ENCODE measurements at regions of chr16 and their contacts with region 1.

Region 1: DNA sequence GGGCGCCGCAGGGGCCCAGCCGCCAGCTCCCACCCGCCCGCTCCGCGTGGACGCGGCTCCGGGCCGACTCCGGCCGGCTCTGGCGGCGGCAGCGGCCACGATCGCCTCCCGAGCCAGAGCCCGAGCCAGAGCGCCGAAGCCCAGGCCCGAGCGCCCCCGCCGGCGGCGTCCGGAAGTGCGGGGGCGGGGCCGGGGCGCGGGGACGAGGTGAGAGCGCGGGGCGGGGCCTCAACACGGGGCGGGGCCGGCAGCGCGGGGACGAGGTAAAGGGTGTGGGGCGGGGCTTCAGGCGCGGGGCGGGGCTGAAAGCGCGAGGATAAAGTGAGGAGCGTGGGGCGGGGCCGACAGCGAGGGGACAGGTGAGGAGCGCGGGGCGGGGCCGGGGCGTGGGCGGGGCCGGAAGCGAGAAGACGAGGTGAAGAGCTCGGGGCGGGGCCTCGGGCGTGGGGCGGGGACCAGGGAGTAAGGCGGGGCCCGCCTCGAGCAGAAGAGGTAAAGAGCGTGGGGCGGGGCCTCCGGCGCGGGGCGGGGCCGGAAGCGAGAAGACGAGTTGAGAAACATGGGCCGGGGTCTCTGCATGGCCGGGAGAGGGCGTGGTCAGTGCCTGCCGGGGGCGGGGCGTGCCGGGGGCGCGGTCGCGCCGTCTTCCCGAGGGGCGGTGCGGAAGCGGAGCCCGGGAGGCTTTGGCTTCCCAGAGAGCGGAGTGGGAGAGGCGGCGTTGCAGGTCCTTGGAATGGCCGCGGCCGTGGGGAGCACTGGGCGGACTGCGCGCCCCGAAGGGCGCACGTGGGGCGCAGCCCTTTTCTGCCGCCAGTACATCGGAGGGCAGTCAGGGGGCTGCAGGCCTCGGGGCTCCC is at the start of gene AXIN1:
- DNase-seq: peak; percentile 97 to 100 (median 99)
- H3K4me3 ChIP-seq: peak within 1 kb of the TSS in 1 of 2 donors; percentile 50
- H3K4me3 Mint-ChIP-seq: peak within 1 kb of the TSS; percentile 92 to 96 (median 93)
- H3K27ac ChIP-seq: peak within 1 kb of the TSS; percentile 57
- H3K27ac Mint-ChIP-seq: peak within 1 kb of the TSS; percentile 88 to 97 (median 94)
- H3K4me1 ChIP-seq: peaks cover 70% of the 10 kb centered on the region
- H3K4me1 Mint-ChIP-seq: peaks cover 25 to 69% (median 51%) of the 10 kb centered on the region in 4 donors
- H3K27me3 ChIP-seq: no peaks in the 10 kb centered on the region
- H3K27me3 Mint-ChIP-seq: no peaks in the 10 kb centered on the region
- total RNA-seq, gene AXIN1: 40.3 to 43.0 TPM

Region 2: DNA sequence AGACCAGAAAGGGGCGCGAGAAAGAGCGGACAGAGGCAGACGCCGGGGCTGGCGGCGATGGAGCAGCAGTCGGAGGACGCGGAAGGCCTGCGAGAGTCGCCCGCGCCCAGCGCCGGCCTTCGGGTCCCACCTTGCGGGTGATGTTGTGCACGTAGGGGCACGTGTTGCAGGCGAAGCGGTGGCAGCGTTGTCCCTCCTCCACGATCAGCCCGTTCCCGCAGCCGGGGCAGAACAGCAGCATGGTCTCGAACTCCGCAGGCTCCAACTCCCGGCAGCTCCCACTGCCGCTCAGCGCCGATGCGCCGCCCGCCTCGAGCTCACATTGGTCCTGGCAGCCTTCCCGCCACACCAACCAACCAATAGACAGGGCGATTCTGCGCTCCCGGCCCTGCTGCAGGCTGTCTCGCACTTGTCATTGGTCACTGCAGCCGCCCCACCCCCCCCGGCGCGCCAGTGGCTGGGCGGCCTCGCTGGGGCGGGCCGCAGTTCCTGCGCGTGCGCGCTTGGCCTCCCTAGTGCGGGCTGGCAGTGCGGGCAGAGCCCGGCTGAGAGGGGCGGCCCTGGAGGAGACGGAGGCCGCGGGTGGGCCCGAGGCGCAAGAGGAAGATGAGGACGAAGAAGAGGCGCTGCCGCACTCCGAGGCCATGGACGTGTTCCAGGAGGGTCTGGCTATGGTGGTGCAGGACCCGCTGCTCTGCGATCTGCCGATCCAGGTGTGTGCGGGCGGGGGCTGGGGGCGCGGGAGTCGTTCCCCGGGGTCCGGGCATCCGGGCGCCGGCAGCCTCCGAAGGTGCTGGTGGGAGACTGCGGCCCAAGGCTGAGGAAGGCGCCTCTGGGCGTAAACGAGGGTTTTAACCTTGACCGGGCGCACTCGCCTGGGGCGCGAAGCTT is 299.2 kb before region 1 on chr16 and contains the starts of genes POLR3K and SNRNP25:
- CTCF ChIA-PET with region 1: no interaction called
- POLR2A ChIA-PET with region 1: interaction called, 4 read pairs
- intact Hi-C with region 1: loop called (anchors 1 kb)
- DNase-seq: peak; percentile 96 to 98 (median 97)
- H3K4me3 ChIP-seq: peak within 1 kb of the TSS; percentile 79 to 84
- H3K4me3 Mint-ChIP-seq: peak within 1 kb of the TSS; percentile 90 to 99 (median 97)
- H3K27ac ChIP-seq: peak within 1 kb of the TSS; percentile 60
- H3K27ac Mint-ChIP-seq: peak within 1 kb of the TSS; percentile 84 to 96 (median 94)
- H3K4me1 ChIP-seq: peaks cover 29% of the 10 kb centered on the region
- H3K4me1 Mint-ChIP-seq: peaks cover 16 to 40% (median 24%) of the 10 kb centered on the region in 4 donors
- H3K27me3 ChIP-seq: no peaks in the 10 kb centered on the region
- H3K27me3 Mint-ChIP-seq: no peaks in the 10 kb centered on the region
- total RNA-seq, gene POLR3K: 19.9 to 21.7 TPM
- total RNA-seq, gene SNRNP25: 10.0 to 10.2 TPM

Region 3: GRCh38 chr16:188671-189070 is 164.1 kb before region 1 on chr16:
- CTCF ChIA-PET with region 1: no interaction called
- POLR2A ChIA-PET with region 1: no interaction called
- intact Hi-C with region 1: no loop called
- DNase-seq: peak in 2 of 5 donors; percentile 21 to 28
- H3K4me3 ChIP-seq: no peak overlapping the region
- H3K4me3 Mint-ChIP-seq: no peak overlapping the region
- H3K27ac ChIP-seq: no peak overlapping the region
- H3K27ac Mint-ChIP-seq: peak overlapping the region in 5 of 7 donors; percentile 22 to 78 (median 72)
- H3K4me1 ChIP-seq: no peaks in the 10 kb centered on the region
- H3K4me1 Mint-ChIP-seq: peaks cover 0 to 4% (median 3%) of the 10 kb centered on the region in 4 donors
- H3K27me3 ChIP-seq: no peaks in the 10 kb centered on the region
- H3K27me3 Mint-ChIP-seq: no peaks in the 10 kb centered on the region

Region 4: DNA sequence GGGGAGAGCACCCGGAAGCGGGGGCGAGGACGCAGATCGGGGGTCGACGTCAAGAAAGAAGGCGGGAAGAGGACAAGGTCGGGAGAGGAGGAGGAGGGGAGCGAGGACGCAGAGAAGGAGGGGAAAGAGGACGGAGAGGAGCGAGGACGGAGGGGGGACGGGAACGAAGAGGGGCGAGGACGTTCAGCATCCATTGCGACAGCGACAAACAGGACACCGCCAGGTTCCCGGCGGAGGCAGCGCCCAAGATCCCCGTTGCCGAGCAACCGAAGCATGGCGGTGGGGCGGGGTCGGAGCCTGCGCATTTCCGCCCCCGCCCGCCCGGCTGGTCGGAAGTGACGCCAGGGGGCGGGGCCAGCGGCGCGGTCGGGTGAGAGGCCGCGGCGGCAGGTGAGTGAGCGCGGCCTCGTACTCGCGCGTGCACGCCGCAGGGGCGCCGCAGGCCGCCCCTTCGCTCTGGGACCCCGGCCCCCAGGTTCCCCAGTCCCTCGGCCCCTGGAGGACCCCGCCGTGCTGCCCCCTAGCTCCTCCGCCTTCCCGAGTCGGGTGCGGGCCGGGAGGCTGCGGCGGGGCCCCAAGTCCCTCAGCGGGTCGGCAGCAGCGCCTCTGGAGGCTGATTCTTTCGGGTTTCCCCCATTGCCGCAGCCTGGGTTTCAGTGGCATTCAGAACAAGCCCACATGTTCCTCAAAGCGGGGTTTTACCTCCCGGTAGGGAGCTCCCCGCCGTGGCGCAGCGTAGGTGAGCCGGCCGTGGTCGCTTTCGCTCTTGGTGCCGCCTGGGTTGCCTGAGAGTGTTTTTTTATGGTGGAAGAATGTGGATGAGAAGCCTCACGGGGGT is 118.1 kb before region 1 on chr16 and contains the start of gene FAM234A:
- CTCF ChIA-PET with region 1: interaction called, 10 read pairs
- POLR2A ChIA-PET with region 1: interaction called, 25 read pairs
- intact Hi-C with region 1: loop called (anchors 1 kb)
- DNase-seq: peak; percentile 95 to 98 (median 96)
- H3K4me3 ChIP-seq: peak within 1 kb of the TSS; percentile 69 to 91
- H3K4me3 Mint-ChIP-seq: peak within 1 kb of the TSS; percentile 90 to 97 (median 96)
- H3K27ac ChIP-seq: peak within 1 kb of the TSS; percentile 98
- H3K27ac Mint-ChIP-seq: peak within 1 kb of the TSS; percentile 99 to 100 (median 99)
- H3K4me1 ChIP-seq: peaks cover 6% of the 10 kb centered on the region
- H3K4me1 Mint-ChIP-seq: peaks cover 8 to 25% (median 16%) of the 10 kb centered on the region in 4 donors
- H3K27me3 ChIP-seq: no peaks in the 10 kb centered on the region
- H3K27me3 Mint-ChIP-seq: no peaks in the 10 kb centered on the region
- total RNA-seq, gene FAM234A: 34.8 to 41.1 TPM

Region 5: DNA sequence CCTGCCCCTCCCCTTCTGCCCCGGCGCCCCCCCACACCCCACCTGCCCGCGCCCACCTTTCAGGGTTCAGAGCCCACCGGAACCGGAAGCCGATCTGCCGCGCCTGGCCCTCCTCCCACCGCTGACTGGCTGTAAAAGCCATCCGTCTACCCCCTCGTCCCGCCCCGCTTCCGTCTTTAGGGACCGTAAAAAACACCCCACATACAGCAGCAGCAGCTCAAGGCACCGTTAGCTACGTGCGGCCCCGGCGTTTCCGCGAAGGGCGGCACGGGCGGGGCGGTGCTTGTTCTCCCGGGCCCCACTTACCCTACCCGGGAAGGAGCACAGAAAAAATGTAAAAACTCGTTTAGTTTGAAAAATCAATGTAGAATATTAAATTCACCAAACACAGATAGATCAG is 17.7 kb after region 1 on chr16 and contains the start of gene MRPL28:
- CTCF ChIA-PET with region 1: no interaction called
- POLR2A ChIA-PET with region 1: interaction called, 8 read pairs
- intact Hi-C with region 1: loop called (anchors 2 kb)
- DNase-seq: peak; percentile 90 to 95 (median 91)
- H3K4me3 ChIP-seq: peak within 1 kb of the TSS in 1 of 2 donors; percentile 19
- H3K4me3 Mint-ChIP-seq: peak within 1 kb of the TSS; percentile 81 to 96 (median 92)
- H3K27ac ChIP-seq: peak within 1 kb of the TSS; percentile 42
- H3K27ac Mint-ChIP-seq: peak within 1 kb of the TSS; percentile 73 to 95 (median 94)
- H3K4me1 ChIP-seq: peaks cover 26% of the 10 kb centered on the region
- H3K4me1 Mint-ChIP-seq: peaks cover 3 to 20% (median 13%) of the 10 kb centered on the region in 4 donors
- H3K27me3 ChIP-seq: no peaks in the 10 kb centered on the region
- H3K27me3 Mint-ChIP-seq: no peaks in the 10 kb centered on the region
- total RNA-seq, gene MRPL28: 27.9 to 29.2 TPM

Region 6: GRCh38 chr16:401468-402348 is 48.9 kb after region 1 on chr16 and contains the start of gene DECR2:
- CTCF ChIA-PET with region 1: no interaction called
- POLR2A ChIA-PET with region 1: interaction called, 7 read pairs
- intact Hi-C with region 1: loop called (anchors 1 kb)
- DNase-seq: peak; percentile 92 to 96 (median 94)
- H3K4me3 ChIP-seq: peak within 1 kb of the TSS; percentile 61 to 68
- H3K4me3 Mint-ChIP-seq: peak within 1 kb of the TSS; percentile 88 to 94 (median 89)
- H3K27ac ChIP-seq: peak within 1 kb of the TSS; percentile 79
- H3K27ac Mint-ChIP-seq: peak within 1 kb of the TSS; percentile 88 to 96 (median 95)
- H3K4me1 ChIP-seq: peaks cover 13% of the 10 kb centered on the region
- H3K4me1 Mint-ChIP-seq: peaks cover 6 to 25% (median 11%) of the 10 kb centered on the region in 4 donors
- H3K27me3 ChIP-seq: no peaks in the 10 kb centered on the region
- H3K27me3 Mint-ChIP-seq: no peaks in the 10 kb centered on the region
- total RNA-seq, gene DECR2: 5.1 to 7.3 TPM

Region 7: GRCh38 chr16:636206-637080 is 283.7 kb after region 1 on chr16 and contains the start of gene METTL26:
- CTCF ChIA-PET with region 1: no interaction called
- POLR2A ChIA-PET with region 1: no interaction called
- intact Hi-C with region 1: loop called (anchors 1 kb)
- DNase-seq: peak; percentile 92 to 95 (median 93)
- H3K4me3 ChIP-seq: peak within 1 kb of the TSS; percentile 81 to 86
- H3K4me3 Mint-ChIP-seq: peak within 1 kb of the TSS; percentile 95 to 100 (median 98)
- H3K27ac ChIP-seq: peak within 1 kb of the TSS; percentile 76
- H3K27ac Mint-ChIP-seq: peak within 1 kb of the TSS; percentile 94 to 100 (median 99)
- H3K4me1 ChIP-seq: peaks cover 21% of the 10 kb centered on the region
- H3K4me1 Mint-ChIP-seq: peaks cover 0 to 10% (median 5%) of the 10 kb centered on the region in 4 donors
- H3K27me3 ChIP-seq: no peaks in the 10 kb centered on the region
- H3K27me3 Mint-ChIP-seq: peaks cover 0 to 3% of the 10 kb centered on the region in 2 donors
- total RNA-seq, gene METTL26: 68.4 to 74.1 TPM

Measured in CD4-positive, alpha-beta memory T cell (primary cell).